Activated CD4-positive, alpha-beta T cell treated with anti-CD3 and anti-CD28 coated beads for 36 hours (primary cell): ENCODE measurements at regions of chr20 and their contacts with region 1.

Region 1: DNA sequence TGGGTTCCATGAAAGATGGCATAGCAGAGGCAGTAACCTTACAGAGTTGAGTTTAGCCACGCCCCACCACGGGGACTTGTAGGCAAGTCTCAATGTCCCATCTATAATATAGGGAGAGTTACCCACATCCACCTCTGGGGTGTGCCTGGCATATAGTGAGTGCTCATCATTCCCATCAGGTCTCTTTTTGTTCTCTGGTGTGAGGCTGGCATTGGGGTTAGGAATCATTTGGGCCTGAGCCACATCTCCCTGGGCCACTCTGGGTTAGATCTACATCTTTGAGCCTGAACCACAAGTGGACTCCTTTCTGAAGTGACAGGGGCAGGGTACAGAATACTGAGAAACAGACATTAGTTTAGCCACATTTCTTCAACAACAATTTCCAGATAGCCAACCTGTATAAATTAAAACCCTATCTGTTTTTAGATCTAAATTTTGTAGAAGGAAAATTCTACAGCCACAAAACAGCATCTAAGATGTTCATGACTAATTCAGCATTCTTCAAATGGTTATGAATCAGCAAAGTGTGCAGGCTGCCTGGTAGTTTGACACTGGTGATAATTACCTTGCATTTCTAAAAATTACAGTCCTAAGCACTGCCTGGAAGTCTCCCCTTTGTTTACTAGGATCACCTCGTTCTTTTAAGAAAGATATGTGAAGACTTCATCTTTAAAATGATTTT is 20.1 kb downstream of the RNF24 start:
- DNase-seq: peak; percentile 50
- ATAC-seq: peak; percentile 80
- H3K4me3 Mint-ChIP-seq: no peak overlapping the region
- H3K27ac Mint-ChIP-seq: peak overlapping the region; percentile 68
- H3K4me1 Mint-ChIP-seq: peaks cover 51% of the 10 kb centered on the region
- H3K27me3 Mint-ChIP-seq: no peaks in the 10 kb centered on the region

Region 2: DNA sequence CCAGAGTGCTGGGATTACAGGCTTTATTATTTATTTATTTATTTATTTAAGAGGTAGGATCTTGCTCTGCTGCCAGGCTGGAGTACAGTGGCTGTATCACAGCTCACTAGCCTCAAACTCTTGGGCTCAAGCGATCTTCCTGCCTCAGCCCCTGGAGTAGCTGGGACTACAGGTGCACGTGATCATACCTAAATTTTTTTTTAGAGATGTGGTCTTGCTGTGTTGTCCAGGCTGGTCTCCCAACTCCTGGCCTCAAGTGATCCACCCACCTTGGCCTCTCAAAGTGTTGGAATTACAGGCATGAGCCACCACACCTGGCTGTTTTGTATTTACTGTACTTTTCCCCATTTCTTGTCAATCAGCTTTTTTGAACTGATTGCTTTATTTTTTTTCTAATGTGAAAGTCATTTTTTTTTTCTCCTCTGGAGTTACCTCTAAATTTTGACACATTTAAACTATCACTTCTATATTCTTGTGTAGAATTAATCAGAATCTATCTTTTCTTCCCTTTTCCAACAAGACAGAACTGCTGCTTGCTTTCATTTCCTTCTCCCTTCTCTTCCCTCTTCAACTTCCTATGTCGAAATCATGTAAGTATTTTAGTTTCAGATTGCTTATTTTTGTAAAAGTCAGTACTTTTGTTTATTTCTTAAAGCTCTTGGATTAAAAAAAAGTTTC is 94.0 kb before region 1 on chr20:
- CTCF ChIA-PET with region 1: no interaction called
- POLR2A ChIA-PET with region 1: interaction called, 10 read pairs
- intact Hi-C with region 1: no loop called
- DNase-seq: no peak
- ATAC-seq: no peak
- H3K4me3 Mint-ChIP-seq: no peak overlapping the region
- H3K27ac Mint-ChIP-seq: peak overlapping the region; percentile 62
- H3K4me1 Mint-ChIP-seq: peaks cover 77% of the 10 kb centered on the region
- H3K27me3 Mint-ChIP-seq: no peaks in the 10 kb centered on the region

Region 3: DNA sequence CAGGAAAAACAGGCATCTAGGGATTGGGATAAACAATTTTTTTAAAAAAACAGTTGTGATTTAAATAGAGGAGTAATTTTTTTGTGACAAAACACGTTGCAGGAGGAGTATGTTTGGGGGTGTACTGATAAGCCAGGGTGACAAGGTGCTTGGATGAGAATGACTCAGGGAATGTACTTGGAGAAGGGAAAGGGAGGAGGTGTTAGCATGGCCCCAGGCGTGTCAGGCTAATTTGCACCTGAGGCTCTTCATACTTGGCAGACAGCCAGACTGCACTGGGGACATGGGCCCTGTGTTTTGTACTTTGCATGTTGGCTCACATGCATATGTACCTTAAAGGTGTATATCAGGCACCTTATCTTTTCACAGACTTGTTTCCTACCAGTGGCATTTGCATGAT is 83.3 kb before region 1 on chr20:
- CTCF ChIA-PET with region 1: no interaction called
- POLR2A ChIA-PET with region 1: no interaction called
- intact Hi-C with region 1: loop called (anchors 1 kb)
- DNase-seq: no peak
- ATAC-seq: no peak
- H3K4me3 Mint-ChIP-seq: no peak overlapping the region
- H3K27ac Mint-ChIP-seq: peak overlapping the region; percentile 2
- H3K4me1 Mint-ChIP-seq: peaks cover 45% of the 10 kb centered on the region
- H3K27me3 Mint-ChIP-seq: no peaks in the 10 kb centered on the region

Region 4: DNA sequence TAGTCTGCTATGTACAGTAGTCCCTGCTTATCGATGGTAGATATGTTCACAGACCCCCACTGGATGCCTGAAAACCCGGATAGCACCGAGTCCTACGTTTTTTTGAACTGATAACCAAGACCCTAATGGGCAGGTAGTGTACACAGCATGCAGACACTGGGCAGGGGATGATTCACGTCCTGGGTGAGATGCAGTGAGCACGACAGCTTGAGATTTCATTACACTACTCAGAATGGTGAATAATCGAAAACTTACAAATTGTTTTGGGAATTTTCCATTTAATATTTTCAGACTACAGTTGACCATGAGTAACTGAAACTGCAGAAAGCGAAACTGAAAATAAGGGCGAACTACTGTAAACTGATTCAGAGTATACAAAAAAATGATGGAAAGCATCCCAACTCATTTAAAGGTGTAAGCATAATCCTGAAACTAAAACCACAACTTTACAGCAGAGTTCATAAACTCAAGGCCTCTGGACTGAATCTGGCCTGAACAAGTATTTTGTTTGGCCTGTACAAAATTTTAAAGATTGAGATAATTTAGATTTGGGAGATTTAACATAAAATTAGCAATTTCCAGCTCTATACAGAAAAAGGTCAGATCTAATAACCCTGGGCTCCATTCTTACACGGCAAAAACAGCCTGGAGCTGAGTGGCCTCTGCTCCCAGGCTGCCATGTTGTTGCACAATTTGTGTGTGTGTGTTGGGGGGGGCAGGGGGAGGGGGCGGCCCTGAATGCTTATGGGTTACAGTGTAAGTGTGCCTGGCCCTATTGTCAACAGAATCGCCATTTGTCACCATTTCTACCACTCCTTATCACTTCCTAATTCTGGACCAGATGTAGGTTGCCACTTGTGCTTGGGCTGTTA is 14.7 kb before region 1 on chr20:
- CTCF ChIA-PET with region 1: interaction called, 5 read pairs
- POLR2A ChIA-PET with region 1: no interaction called
- intact Hi-C with region 1: loop called (anchors 1 kb)
- DNase-seq: peak; percentile 65
- ATAC-seq: peak; percentile 93
- H3K4me3 Mint-ChIP-seq: peak overlapping the region; percentile 24
- H3K27ac Mint-ChIP-seq: peak overlapping the region; percentile 83
- H3K4me1 Mint-ChIP-seq: peaks cover 21% of the 10 kb centered on the region
- H3K27me3 Mint-ChIP-seq: no peaks in the 10 kb centered on the region